ENCODE measurements at regions of chr12 and their contacts with region 1.

Region 1: GRCh38 chr12:22164139-22164538 is 118.1 kb downstream of the CMAS start:
- DNase-seq: peak; percentile 21
- H3K4me3 Mint-ChIP-seq: peak overlapping the region; percentile 3
- H3K27ac Mint-ChIP-seq: peak overlapping the region; percentile 1
- H3K4me1 Mint-ChIP-seq: peaks cover 40% of the 10 kb centered on the region
- H3K27me3 Mint-ChIP-seq: no peaks in the 10 kb centered on the region

Region 2: DNA sequence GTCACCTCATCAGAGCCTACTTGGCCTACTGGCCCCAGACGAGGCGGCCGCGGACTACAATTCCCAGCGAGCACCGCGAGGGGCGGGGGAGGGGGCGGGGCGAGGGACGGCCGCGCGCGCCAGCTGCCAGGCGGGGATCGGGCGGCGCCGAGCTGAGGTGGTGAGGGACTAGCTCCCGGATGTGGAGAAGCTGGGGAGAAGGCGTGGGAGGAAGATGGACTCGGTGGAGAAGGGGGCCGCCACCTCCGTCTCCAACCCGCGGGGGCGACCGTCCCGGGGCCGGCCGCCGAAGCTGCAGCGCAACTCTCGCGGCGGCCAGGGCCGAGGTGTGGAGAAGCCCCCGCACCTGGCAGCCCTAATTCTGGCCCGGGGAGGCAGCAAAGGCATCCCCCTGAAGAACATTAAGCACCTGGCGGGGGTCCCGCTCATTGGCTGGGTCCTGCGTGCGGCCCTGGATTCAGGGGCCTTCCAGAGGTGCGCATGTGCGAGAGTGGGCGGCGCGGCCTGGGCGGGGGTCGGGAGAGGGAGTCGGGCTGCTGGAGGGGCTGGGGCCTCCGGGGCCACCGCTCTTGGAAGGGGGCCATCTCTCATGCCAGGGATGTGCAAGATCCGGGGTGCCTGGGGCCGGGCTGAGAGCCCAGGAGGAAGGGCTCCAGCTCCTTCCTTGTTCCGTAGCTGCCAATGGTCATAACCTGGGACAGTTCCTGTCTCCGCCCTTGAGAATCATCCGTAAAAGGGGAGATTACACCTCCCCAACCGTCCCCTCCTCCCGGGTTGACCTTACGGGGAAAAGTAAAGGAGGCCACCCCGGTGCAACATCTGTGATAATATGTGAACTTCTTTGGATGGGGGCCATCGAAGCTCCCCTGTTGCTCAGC is 117.8 kb before region 1 on chr12 and contains the start of gene CMAS:
- CTCF ChIA-PET with region 1: no interaction called
- intact Hi-C with region 1: loop called (anchors 2 kb)
- DNase-seq: peak; percentile 84
- H3K4me3 Mint-ChIP-seq: peak within 1 kb of the TSS; percentile 95
- H3K27ac Mint-ChIP-seq: peak within 1 kb of the TSS; percentile 84
- H3K4me1 Mint-ChIP-seq: peaks cover 39% of the 10 kb centered on the region
- H3K27me3 Mint-ChIP-seq: no peaks in the 10 kb centered on the region
- total RNA-seq, gene CMAS: 47.3 to 48.5 TPM